ENCODE measurements at regions of chr9 and their contacts with region 1.

Region 1: GRCh38 chr9:7237494-7238243 is 479.9 kb downstream of the KDM4C start:
- DNase-seq: peak; percentile 45 to 47
- H3K4me3 ChIP-seq: no peak overlapping the region
- H3K4me3 Mint-ChIP-seq: no peak overlapping the region
- H3K27ac Mint-ChIP-seq: no peak overlapping the region
- H3K4me1 ChIP-seq: 0 out of 2 replicates have a peak, but pooled peaks cover 3% of the 10 kb centered on the region
- H3K4me1 Mint-ChIP-seq: peaks cover 12% of the 10 kb centered on the region
- H3K27me3 ChIP-seq: no peaks in the 10 kb centered on the region
- H3K27me3 Mint-ChIP-seq: peaks cover 19% of the 10 kb centered on the region
- CTCF ChIP-seq: no peak

Region 2: GRCh38 chr9:7259544-7260241 is 22.0 kb after region 1 on chr9:
- CTCF ChIA-PET with region 1: no interaction called
- POLR2A ChIA-PET with region 1: no interaction called
- intact Hi-C with region 1: loop called (anchors 1 kb)
- DNase-seq: no peak
- H3K4me3 ChIP-seq: no peak overlapping the region
- H3K4me3 Mint-ChIP-seq: no peak overlapping the region
- H3K27ac Mint-ChIP-seq: no peak overlapping the region
- H3K4me1 ChIP-seq: no peaks in the 10 kb centered on the region
- H3K4me1 Mint-ChIP-seq: peaks cover 13% of the 10 kb centered on the region
- H3K27me3 ChIP-seq: no peaks in the 10 kb centered on the region; the same call in 1 of the 2 replicates
- H3K27me3 Mint-ChIP-seq: peaks cover 28% of the 10 kb centered on the region
- CTCF ChIP-seq: peak in 1 of 2 experiments; percentile 13